ENCODE measurements at regions of chr14 and their contacts with region 1.

Region 1: GRCh38 chr14:31026395-31027118 is 378 bp upstream of the STRN3 start:
- H3K4me3 ChIP-seq: peak overlapping the region; percentile 100
- H3K27ac ChIP-seq: peak overlapping the region; percentile 98
- H3K4me1 ChIP-seq: peaks cover 14% of the 10 kb centered on the region
- CTCF ChIP-seq: no peak

Region 2: DNA sequence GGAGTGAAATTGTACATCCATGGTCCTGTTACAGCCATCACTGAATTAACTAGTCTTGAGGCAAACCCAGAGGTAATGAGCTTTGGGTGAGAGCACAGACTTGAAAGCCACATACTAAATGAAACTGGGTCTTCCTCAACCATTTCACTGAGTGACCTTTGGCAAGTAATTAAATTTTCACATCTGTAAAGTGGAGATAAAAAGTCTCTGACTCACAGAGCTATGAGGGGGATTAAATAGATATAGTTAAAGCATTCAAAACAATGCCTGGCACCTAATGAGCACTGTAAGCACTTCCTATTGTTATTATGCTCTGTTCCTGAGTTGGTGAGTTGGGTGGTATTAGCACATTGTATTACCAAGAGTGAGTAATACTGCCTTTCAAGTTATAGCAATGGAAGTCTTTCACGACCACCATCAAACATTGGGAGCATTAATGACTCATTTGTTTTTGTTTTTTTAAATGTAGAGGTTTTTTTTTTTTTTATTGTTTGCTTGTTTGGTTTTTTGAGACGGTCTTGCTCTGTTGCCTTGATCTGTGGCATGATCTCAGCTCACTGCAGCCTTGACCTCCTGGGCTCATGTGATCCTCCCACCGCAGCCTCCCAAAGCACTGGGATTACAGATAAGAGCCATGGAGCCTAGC is 12.1 kb after region 1 on chr14:
- CTCF ChIA-PET with region 1: no interaction called
- POLR2A ChIA-PET with region 1: interaction called, 10 read pairs
- H3K4me3 ChIP-seq: no peak overlapping the region
- H3K27ac ChIP-seq: no peak overlapping the region
- H3K4me1 ChIP-seq: peaks cover 3% of the 10 kb centered on the region; the same call in 1 of the 2 replicates
- CTCF ChIP-seq: no peak

Region 3: DNA sequence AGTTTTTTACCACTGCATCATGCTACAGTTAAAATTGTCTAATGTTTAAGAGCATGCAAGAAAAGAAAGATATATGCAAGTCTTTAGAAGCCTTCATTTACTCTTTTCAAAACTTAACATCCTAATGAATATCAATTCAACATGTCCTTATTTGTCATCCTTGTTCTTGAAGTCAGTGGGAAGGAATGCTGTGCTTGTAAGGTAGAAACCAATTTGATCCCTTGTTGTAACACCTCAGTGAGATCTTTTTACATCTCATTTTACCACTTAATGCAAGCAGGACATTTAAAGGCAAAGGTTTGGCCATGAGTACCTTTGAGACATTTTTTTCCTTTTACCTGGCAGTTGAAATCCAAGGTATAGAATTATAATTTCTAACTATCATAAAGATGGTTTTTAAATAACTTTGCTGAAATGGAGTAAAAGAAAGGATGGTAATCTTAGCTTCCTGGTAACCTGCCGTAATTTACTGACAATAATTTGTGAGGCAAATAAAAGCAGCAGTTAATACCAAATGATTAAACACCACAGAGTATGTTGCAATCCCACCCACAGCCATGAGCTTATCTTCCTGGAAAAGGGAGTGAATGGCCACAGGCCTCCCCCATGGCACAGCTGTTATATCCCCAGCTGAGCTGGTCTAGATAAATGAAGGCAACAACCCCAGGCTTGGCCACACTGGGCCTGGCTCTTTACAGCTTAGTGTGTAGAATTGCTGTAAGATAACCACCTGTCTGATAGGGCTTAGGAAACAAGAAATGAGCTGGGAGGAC is 32.8 kb after region 1 on chr14:
- CTCF ChIA-PET with region 1: interaction called, 3 read pairs
- POLR2A ChIA-PET with region 1: interaction called, 10 read pairs
- H3K4me3 ChIP-seq: no peak overlapping the region
- H3K27ac ChIP-seq: no peak overlapping the region
- H3K4me1 ChIP-seq: peaks cover 8% of the 10 kb centered on the region
- CTCF ChIP-seq: no peak

Measured in HEK293 (cell line).